BJ (cell line): ENCODE measurements at regions of chr5 and their contacts with region 1.

Region 1: GRCh38 chr5:154830219-154830595 is 20.2 kb downstream of the FAXDC2 start:
- DNase-seq: no peak
- H3K4me3 ChIP-seq: no peak overlapping the region
- H3K27me3 ChIP-seq: no peaks in the 10 kb centered on the region
- CTCF ChIP-seq: no peak

Region 2: DNA sequence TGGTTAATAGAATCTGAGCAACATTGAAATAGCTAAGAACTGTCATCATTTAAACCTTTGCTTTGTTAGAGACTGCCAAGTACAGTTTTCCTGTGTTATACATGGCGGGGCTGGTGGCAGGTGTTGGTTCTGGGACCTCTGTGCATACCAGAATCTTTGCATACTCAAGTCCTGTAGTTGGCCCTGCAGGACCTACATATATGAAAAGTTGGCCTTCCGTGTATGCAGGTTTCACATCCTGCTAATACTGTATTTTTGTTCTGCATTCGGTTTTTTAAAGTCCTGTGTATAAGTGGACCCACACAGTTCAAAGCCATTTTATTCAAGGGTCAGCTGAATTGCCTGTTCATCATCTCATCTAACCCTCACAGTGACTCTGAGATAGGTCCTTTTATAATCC is 38.7 kb before region 1 on chr5:
- CTCF ChIA-PET with region 1: no interaction called
- POLR2A ChIA-PET with region 1: interaction called, 23 read pairs
- DNase-seq: no peak
- H3K4me3 ChIP-seq: no peak overlapping the region
- H3K27me3 ChIP-seq: no peaks in the 10 kb centered on the region
- CTCF ChIP-seq: no peak